IMR-90 (cell line): ENCODE measurements at regions of chr11 and their contacts with region 1.

Region 1: DNA sequence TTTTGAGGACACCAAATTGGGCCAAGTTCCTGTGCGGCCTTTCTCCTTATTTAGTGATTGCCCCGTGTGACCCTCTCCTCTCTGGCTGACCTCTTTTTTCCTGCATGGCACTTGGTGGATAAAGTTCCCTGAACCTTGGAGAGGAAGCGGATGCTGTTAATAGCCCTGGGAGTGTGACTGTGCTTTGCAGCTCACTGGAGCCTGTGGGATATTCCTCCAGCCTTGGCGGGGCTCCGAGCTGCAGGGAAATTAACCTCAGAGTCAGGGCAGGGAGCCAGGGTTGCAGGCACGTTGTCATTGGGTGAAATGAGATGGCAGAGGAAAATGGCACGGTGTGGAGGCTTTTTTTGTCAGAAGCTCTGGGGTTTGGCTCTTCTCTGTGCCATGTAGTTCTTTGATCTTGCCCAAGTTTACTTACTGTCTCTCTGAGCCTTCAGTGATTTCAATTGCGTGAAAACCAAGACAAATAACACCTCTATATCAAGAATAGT is 965 bp downstream of the OR9Q1 start:
- DNase-seq: peak; percentile 60
- ATAC-seq: no peak
- H3K4me3 ChIP-seq: no peak overlapping the region
- H3K27ac ChIP-seq: peak overlapping the region; percentile 66; the same call in 1 of the 2 replicates
- H3K4me1 ChIP-seq: peaks cover 23% of the 10 kb centered on the region
- H3K27me3 ChIP-seq: no peaks in the 10 kb centered on the region
- CTCF ChIP-seq: no peak
- POLR2A ChIP-seq: no peak
- RAD21 ChIP-seq: no peak

Region 2: DNA sequence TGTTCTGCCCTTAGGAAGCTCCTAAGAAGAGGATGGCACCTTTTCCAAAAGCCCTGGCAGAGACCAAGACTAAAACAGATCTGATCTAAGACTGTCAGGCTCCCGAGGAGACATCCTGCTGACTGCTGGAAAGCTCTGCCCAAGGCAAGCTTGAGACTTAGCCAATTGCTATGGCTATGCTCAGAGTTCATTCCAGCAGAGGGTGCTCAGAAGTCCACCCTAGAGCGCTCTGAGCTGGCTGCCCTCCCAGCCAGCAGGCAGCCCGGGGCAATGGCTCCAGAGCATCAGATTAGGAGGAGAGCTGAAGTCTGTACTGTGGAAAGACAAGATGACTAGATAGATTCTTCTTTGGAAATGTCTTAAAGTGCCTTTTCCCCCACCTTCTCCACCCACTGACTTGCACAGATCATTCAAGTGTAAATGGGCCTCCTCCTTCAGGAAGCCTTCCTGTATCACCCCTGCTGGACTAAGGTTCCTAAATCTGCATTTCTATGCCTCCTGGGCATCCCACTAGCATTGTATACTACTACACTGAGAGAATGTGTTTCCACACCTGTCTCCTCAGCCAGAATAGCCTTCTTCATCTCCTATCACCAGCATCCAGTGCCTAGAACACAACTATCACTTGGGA is 819.5 kb before region 1 on chr11:
- CTCF ChIA-PET with region 1: no interaction called
- POLR2A ChIA-PET with region 1: no interaction called
- dilution Hi-C with region 1: no loop called
- in situ Hi-C with region 1: no loop called
- intact Hi-C with region 1: no loop called
- DNase-seq: peak; percentile 62
- ATAC-seq: peak; percentile 93
- H3K4me3 ChIP-seq: no peak overlapping the region
- H3K27ac ChIP-seq: no peak overlapping the region
- H3K4me1 ChIP-seq: no peaks in the 10 kb centered on the region; the same call in 1 of the 2 replicates
- H3K27me3 ChIP-seq: peaks cover 44% of the 10 kb centered on the region
- CTCF ChIP-seq: peak; percentile 38
- POLR2A ChIP-seq: no peak
- RAD21 ChIP-seq: peak; percentile 33

Region 3: GRCh38 chr11:57311109-57311936 is 713.3 kb before region 1 on chr11:
- CTCF ChIA-PET with region 1: no interaction called
- POLR2A ChIA-PET with region 1: interaction called, 10 read pairs
- dilution Hi-C with region 1: no loop called
- in situ Hi-C with region 1: no loop called
- intact Hi-C with region 1: no loop called
- DNase-seq: peak; percentile 97
- ATAC-seq: peak; percentile 94
- H3K4me3 ChIP-seq: peak overlapping the region; percentile 43
- H3K27ac ChIP-seq: peak overlapping the region; percentile 97
- H3K4me1 ChIP-seq: peaks cover 50% of the 10 kb centered on the region
- H3K27me3 ChIP-seq: no peaks in the 10 kb centered on the region
- CTCF ChIP-seq: no peak
- POLR2A ChIP-seq: peak; percentile 65; the same call in 1 of the 2 replicates
- RAD21 ChIP-seq: no peak

Region 4: DNA sequence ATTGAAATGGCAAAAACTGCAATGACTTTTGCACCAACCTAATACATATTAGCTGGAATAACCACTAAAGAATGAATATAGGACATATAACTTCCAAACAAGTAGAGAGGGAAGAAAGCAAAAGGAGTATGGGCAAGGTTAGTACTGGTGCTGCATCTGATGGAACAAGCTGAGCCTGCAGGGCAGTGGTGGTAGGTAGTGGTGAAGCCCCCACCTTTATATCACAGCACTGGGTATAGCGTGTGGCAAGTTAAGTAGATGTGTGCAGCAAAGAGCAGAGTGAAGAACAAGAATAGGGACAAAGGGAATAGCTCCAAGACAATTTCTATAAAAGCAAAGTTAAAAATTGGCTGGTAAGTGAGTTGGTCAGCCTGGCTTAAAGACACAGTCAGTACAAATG is 200.8 kb before region 1 on chr11:
- CTCF ChIA-PET with region 1: no interaction called
- POLR2A ChIA-PET with region 1: no interaction called
- dilution Hi-C with region 1: no loop called
- in situ Hi-C with region 1: no loop called
- intact Hi-C with region 1: loop called (anchors 5 kb)
- DNase-seq: no peak
- ATAC-seq: no peak
- H3K4me3 ChIP-seq: no peak overlapping the region
- H3K27ac ChIP-seq: no peak overlapping the region
- H3K4me1 ChIP-seq: no peaks in the 10 kb centered on the region
- H3K27me3 ChIP-seq: no peaks in the 10 kb centered on the region
- CTCF ChIP-seq: no peak
- POLR2A ChIP-seq: no peak
- RAD21 ChIP-seq: no peak

Region 5: GRCh38 chr11:58133309-58134076 is 108.8 kb after region 1 on chr11:
- CTCF ChIA-PET with region 1: no interaction called
- POLR2A ChIA-PET with region 1: no interaction called
- dilution Hi-C with region 1: no loop called
- in situ Hi-C with region 1: no loop called
- intact Hi-C with region 1: no loop called
- DNase-seq: no peak
- ATAC-seq: peak; percentile 72
- H3K4me3 ChIP-seq: no peak overlapping the region
- H3K27ac ChIP-seq: no peak overlapping the region
- H3K4me1 ChIP-seq: no peaks in the 10 kb centered on the region
- H3K27me3 ChIP-seq: no peaks in the 10 kb centered on the region
- CTCF ChIP-seq: no peak
- POLR2A ChIP-seq: no peak
- RAD21 ChIP-seq: no peak

Region 6: GRCh38 chr11:58286249-58286648 is 261.6 kb after region 1 on chr11:
- CTCF ChIA-PET with region 1: no interaction called
- POLR2A ChIA-PET with region 1: interaction called, 3 read pairs
- dilution Hi-C with region 1: no loop called
- in situ Hi-C with region 1: no loop called
- intact Hi-C with region 1: loop called (anchors 5 kb)
- DNase-seq: peak; percentile 60
- ATAC-seq: peak; percentile 98
- H3K4me3 ChIP-seq: no peak overlapping the region
- H3K27ac ChIP-seq: no peak overlapping the region
- H3K4me1 ChIP-seq: peaks cover 10% of the 10 kb centered on the region; the same call in 1 of the 2 replicates
- H3K27me3 ChIP-seq: no peaks in the 10 kb centered on the region
- CTCF ChIP-seq: peak; percentile 75
- POLR2A ChIP-seq: no peak
- RAD21 ChIP-seq: peak; percentile 76

Region 7: GRCh38 chr11:58394195-58394594 is 369.5 kb after region 1 on chr11:
- CTCF ChIA-PET with region 1: no interaction called
- POLR2A ChIA-PET with region 1: interaction called, 3 read pairs
- dilution Hi-C with region 1: no loop called
- in situ Hi-C with region 1: no loop called
- intact Hi-C with region 1: loop called (anchors 2 kb)
- DNase-seq: peak; percentile 82
- ATAC-seq: peak; percentile 30
- H3K4me3 ChIP-seq: no peak overlapping the region
- H3K27ac ChIP-seq: no peak overlapping the region; the same call in 1 of the 2 replicates
- H3K4me1 ChIP-seq: peaks cover 13% of the 10 kb centered on the region; the same call in 1 of the 2 replicates
- H3K27me3 ChIP-seq: no peaks in the 10 kb centered on the region
- CTCF ChIP-seq: no peak
- POLR2A ChIP-seq: no peak
- RAD21 ChIP-seq: no peak